Activated CD4-positive, alpha-beta memory T cell treated with anti-CD3 and anti-CD28 coated beads, Interleukin-2, amount 10 ng/mL, durations not matched to agents 7 days and 5 days (primary cell): ENCODE measurements at regions of chr12 and their contacts with region 1.

Region 1: GRCh38 chr12:117063162-117063911 is 35.9 kb downstream of the TESC start:
- DNase-seq: peak; percentile 71
- H3K4me3 Mint-ChIP-seq: peak overlapping the region; percentile 47
- H3K27ac Mint-ChIP-seq: peak overlapping the region; percentile 84
- H3K4me1 Mint-ChIP-seq: peaks cover 42% of the 10 kb centered on the region
- H3K27me3 Mint-ChIP-seq: no peaks in the 10 kb centered on the region

Region 2: GRCh38 chr12:117098361-117099217 is 35.3 kb after region 1 on chr12:
- CTCF ChIA-PET with region 1: interaction called, 5 read pairs
- POLR2A ChIA-PET with region 1: interaction called, 24 read pairs
- DNase-seq: peak; percentile 41
- H3K4me3 Mint-ChIP-seq: peak overlapping the region; percentile 69
- H3K27ac Mint-ChIP-seq: no peak overlapping the region
- H3K4me1 Mint-ChIP-seq: peaks cover 22% of the 10 kb centered on the region
- H3K27me3 Mint-ChIP-seq: peaks cover 33% of the 10 kb centered on the region